H1 (cell line): ENCODE measurements at regions of chr14 and their contacts with region 1.

Region 1: GRCh38 chr14:94036313-94037050 is 10.3 kb downstream of the OTUB2 start:
- DNase-seq: peak; percentile 60 to 91
- H3K4me3 ChIP-seq: no peak overlapping the region
- H3K27ac ChIP-seq: no peak overlapping the region
- H3K4me1 ChIP-seq: peaks cover 0 to 9% (median 0%) of the 10 kb centered on the region in 4 experiments; a peak in 2 of 7 replicates
- H3K27me3 ChIP-seq: no peaks in the 10 kb centered on the region
- CTCF ChIP-seq: peak; percentile 81 to 97 (median 97)
- EP300 ChIP-seq: no peak
- POLR2A ChIP-seq: no peak
- RAD21 ChIP-seq: peak; percentile 64 to 72

Region 2: GRCh38 chr14:93712838-93713724 is 323.4 kb before region 1 on chr14:
- CTCF ChIA-PET with region 1: no interaction called
- POLR2A ChIA-PET with region 1: no interaction called
- DNase-seq: peak in 1 of 2 experiments; percentile 41
- H3K4me3 ChIP-seq: no peak overlapping the region
- H3K27ac ChIP-seq: no peak overlapping the region
- H3K4me1 ChIP-seq: peaks cover 4 to 13% (median 7%) of the 10 kb centered on the region in 4 experiments
- H3K27me3 ChIP-seq: 0 out of 7 replicates have a peak, but pooled peaks cover 0 to 4% (median 0%) of the 10 kb centered on the region in 4 experiments
- CTCF ChIP-seq: no peak
- EP300 ChIP-seq: no peak
- POLR2A ChIP-seq: no peak
- RAD21 ChIP-seq: no peak

Region 3: GRCh38 chr14:94021001-94021400 is 15.5 kb before region 1 on chr14:
- CTCF ChIA-PET with region 1: interaction called, 23 read pairs
- POLR2A ChIA-PET with region 1: no interaction called
- DNase-seq: no peak
- H3K4me3 ChIP-seq: no peak overlapping the region
- H3K27ac ChIP-seq: no peak overlapping the region
- H3K4me1 ChIP-seq: peaks cover 0 to 18% (median 10%) of the 10 kb centered on the region in 4 experiments; a peak in 4 of 7 replicates
- H3K27me3 ChIP-seq: no peaks in the 10 kb centered on the region; a peak in 1 of 7 replicates
- CTCF ChIP-seq: no peak
- EP300 ChIP-seq: no peak
- POLR2A ChIP-seq: no peak
- RAD21 ChIP-seq: no peak

Region 4: GRCh38 chr14:94026173-94026888 is 10.2 kb before region 1 on chr14 and contains the start of gene OTUB2:
- CTCF ChIA-PET with region 1: interaction called, 23 read pairs
- POLR2A ChIA-PET with region 1: no interaction called
- DNase-seq: peak; percentile 98 to 99
- H3K4me3 ChIP-seq: peak within 1 kb of the TSS; percentile 45 to 82 (median 56)
- H3K27ac ChIP-seq: no peak within 1 kb of the TSS
- H3K4me1 ChIP-seq: peaks cover 0 to 22% (median 13%) of the 10 kb centered on the region in 4 experiments; a peak in 4 of 7 replicates
- H3K27me3 ChIP-seq: peaks cover 0 to 3% (median 3%) of the 10 kb centered on the region in 4 experiments; a peak in 2 of 7 replicates
- CTCF ChIP-seq: no peak
- EP300 ChIP-seq: no peak
- POLR2A ChIP-seq: no peak
- RAD21 ChIP-seq: no peak
- total RNA-seq, gene OTUB2: 4.1 and 4.2 TPM in 2 replicates